Gastrocnemius medialis (tissue), 4 donors: ENCODE measurements at regions of chr6 and their contacts with region 1.

Region 1: DNA sequence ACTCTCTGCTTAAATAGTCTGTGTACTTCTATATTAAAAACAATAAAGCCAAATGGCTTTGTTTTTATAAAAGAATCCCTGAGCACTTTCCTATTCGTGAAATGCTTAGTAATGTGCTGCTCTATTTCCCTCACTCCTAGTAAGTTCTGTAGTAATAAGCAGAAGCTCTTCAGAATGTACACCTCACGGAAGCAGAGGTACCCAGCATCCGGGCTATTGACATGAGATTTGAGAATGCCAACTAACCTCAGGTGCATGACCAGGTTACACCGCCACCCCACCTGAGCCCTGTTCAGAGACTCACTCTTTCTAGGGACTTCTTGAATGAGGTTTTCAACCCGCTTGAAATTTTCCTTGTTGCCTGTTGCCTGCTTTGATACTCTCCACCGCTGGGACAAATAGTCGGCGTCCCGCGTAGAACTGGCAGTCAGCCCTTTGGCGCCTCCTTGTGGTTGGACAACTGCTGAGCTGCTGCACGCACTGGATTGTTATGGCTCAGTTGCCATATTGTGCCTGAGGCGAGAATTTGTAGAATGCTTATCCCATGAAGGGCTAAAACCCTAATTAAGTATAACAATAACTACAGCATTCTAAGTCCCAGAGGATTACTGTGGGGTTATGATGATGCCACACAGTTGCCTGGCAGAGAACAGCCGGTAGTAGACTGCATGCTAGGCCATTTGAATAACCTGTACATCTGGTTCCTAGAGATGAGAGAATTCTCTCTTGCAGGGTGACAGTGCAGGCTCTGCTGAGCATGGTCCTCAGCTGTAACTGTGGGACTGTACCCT is 95.4 kb downstream of the KHDC1L start:
- DNase-seq: peak; percentile 61 to 75
- ATAC-seq: peak; percentile 63 to 85
- H3K4me3 ChIP-seq: peak overlapping the region in 2 of 4 donors; percentile 15 to 38
- H3K27ac ChIP-seq: no peak overlapping the region
- H3K4me1 ChIP-seq: no peaks in the 10 kb centered on the region
- H3K27me3 ChIP-seq: no peaks in the 10 kb centered on the region
- CTCF ChIP-seq: peak; percentile 90 to 94 (median 91)
- POLR2A ChIP-seq: no peak

Region 2: GRCh38 chr6:72616406-72617015 is 513.3 kb before region 1 on chr6:
- in situ Hi-C with region 1: loop called (anchors 5 to 10 kb)
- intact Hi-C with region 1: loop called (anchors 1 kb)
- DNase-seq: no peak
- ATAC-seq: no peak
- H3K4me3 ChIP-seq: no peak overlapping the region
- H3K27ac ChIP-seq: no peak overlapping the region
- H3K4me1 ChIP-seq: peaks cover 7 to 19% of the 10 kb centered on the region in 2 donors
- H3K27me3 ChIP-seq: no peaks in the 10 kb centered on the region
- CTCF ChIP-seq: peak; percentile 25 to 63 (median 48)
- POLR2A ChIP-seq: no peak

Region 3: GRCh38 chr6:73180763-73181619 is 51.1 kb after region 1 on chr6:
- in situ Hi-C with region 1: no loop called
- intact Hi-C with region 1: loop called (anchors 2 kb)
- DNase-seq: peak in 1 of 2 donors; percentile 30
- ATAC-seq: peak; percentile 91 to 95
- H3K4me3 ChIP-seq: peak overlapping the region in 3 of 4 donors; percentile 11 to 33 (median 21)
- H3K27ac ChIP-seq: peak overlapping the region in 3 of 4 donors; percentile 15 to 62 (median 44)
- H3K4me1 ChIP-seq: peaks cover 7 to 10% of the 10 kb centered on the region in 2 donors
- H3K27me3 ChIP-seq: no peaks in the 10 kb centered on the region
- CTCF ChIP-seq: peak; percentile 58 to 89 (median 76)
- POLR2A ChIP-seq: no peak